ENCODE measurements at regions of chr11 and their contacts with region 1.

Region 1: DNA sequence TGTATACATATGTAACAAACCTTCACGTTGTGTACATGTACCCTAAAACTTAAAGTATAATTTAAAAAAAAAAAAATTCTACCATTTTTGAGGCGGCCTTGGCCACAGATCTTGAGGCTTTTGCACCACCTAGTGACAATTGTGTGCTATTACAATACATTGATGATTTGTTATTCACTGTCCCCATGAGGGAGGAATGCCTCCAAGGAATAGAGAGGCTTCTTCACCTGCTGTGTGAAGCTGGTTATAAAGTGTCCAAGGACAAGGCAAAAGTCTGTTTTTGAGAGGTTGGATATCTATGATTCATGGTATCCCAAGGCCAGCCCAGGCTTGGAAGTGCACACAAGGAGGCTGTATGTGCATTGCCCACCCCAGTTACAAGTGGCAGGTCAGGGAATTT is 30.7 kb downstream of the SLC22A25 start:
- ATAC-seq: peak in 1 of 8 experiments; percentile 16
- H3K4me3 ChIP-seq: no peak overlapping the region
- H3K27ac ChIP-seq: no peak overlapping the region
- H3K4me1 ChIP-seq: no peaks in the 10 kb centered on the region

Region 2: DNA sequence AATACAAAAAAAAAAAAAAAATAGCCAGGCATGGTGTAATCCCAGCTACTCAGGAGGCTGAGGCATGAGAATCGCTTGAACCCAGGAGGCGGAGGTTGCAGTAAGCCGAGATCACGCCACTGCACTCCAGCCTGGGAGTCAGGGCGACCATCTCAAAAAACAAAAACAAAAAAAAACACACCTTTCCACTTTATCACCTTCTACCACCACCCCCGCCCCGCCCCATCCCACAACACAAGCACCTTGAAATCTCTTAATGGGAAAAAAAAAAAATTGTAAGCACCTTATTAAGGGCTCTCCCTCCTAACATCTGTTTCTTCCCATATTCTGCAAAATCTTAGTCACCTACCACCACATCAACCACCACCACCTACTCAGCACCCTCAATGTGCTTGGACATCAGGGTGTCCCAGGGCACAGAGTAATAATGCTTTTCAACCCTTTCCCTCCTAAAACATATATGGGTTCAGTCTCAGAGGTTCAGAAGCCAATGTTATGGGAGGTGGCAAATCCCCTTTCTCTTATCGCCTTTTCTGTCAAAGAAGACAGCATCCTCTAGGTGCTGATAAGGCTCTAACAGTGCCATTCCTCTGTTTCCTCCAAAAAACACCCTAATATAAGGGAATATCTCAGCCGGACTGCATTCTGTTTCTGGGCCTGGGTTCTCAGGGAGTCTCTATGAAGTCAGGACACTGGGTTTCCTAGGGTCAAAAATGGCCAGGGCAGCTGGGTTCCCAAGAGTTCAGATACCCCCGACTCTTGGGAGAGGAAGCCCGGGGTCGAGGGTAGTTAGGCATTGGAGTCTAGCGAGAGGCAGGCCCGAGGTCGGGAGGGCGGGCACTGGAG is 560.4 kb before region 1 on chr11:
- in situ Hi-C with region 1: no loop called
- ATAC-seq: no peak
- H3K4me3 ChIP-seq: peak overlapping the region; percentile 93 to 100 (median 99)
- H3K27ac ChIP-seq: peak overlapping the region; percentile 89 to 91
- H3K4me1 ChIP-seq: peaks cover 3 to 7% of the 10 kb centered on the region in 2 donors

Region 3: DNA sequence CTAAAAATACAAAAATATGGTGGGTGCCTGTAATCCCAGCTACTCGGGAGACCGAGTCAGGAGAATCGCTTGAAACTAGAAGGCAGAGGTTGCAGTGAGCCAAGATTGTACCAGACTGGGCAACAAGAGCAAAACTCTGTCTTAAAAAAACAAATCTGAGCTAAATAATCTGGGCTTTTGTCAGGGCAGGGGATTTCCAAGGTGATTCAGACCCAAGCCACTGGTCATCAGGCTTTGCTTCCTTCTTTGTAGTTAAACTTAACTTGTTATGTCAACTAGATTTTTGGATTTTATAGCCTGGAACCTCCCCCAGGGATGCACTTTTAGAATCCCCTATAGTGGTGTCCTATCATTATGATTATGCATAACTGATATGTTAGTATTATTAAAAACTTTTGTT is 170.1 kb before region 1 on chr11:
- in situ Hi-C with region 1: loop called in 3 of 9 experiments (anchors 25 kb)
- ATAC-seq: no peak
- H3K4me3 ChIP-seq: no peak overlapping the region
- H3K27ac ChIP-seq: no peak overlapping the region
- H3K4me1 ChIP-seq: no peaks in the 10 kb centered on the region

Measured in motor neuron (in vitro differentiated cells).